ENCODE measurements at regions of chr18 and their contacts with region 1.

Region 1: DNA sequence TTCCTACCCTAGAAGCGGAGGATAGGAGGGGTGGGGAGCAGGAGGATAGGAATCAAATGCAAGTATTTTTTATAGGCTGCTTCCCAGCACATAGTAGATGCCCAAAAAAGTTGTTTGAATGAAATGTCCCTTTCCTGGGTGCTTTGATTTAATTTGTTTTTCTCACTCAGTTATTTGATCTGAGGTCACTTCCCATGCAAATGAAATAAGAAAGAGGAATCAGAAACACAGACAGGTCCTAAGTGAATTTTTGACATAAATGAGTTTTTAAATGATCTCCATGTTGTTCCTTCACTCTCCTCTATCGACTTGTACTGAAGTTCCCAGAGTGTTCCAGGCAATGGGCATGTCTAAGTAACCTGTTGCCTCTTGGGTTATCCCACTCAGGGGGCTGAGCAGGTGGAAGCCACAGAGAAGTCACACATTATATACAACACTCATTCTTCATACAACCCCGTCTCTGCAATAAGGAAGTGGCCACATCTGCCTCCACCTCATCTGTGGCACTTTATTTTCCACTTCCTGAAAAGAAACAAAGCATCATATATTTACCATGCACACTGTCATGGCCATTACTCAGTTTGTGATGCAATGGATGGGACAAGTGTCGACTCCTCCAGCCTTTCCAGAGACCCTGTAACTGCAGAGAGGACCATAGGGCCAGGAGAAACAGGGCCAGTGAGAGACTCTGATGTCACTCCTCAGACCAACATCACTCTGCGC is 81.9 kb upstream of the ZNF397 start:
- DNase-seq: peak; percentile 30 to 36
- ATAC-seq: peak; percentile 84 to 88 (median 85)
- H3K4me3 ChIP-seq: no peak overlapping the region
- H3K4me3 Mint-ChIP-seq: peak overlapping the region; percentile 62
- H3K27ac ChIP-seq: peak overlapping the region; percentile 86
- H3K27ac Mint-ChIP-seq: peak overlapping the region; percentile 92
- H3K4me1 ChIP-seq: peaks cover 50% of the 10 kb centered on the region
- H3K4me1 Mint-ChIP-seq: peaks cover 71 to 72% of the 10 kb centered on the region in 2 donors
- H3K27me3 ChIP-seq: no peaks in the 10 kb centered on the region
- H3K27me3 Mint-ChIP-seq: no peaks in the 10 kb centered on the region
- CTCF ChIP-seq: no peak

Region 2: DNA sequence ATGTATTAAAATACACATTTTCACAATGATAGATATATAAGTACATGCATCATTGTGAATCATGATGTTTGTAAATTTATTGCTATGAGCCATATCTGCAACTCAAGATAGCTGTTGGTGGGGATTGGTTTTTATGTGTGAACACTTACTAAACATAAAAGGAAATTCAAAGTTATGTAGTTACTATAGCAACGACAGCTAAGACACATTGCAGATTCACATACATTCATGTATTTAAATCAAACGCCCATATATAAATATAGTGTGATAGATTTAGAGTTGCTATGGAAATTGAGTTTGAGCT is 52.1 kb before region 1 on chr18:
- intact Hi-C with region 1: loop called (anchors 1 kb)
- DNase-seq: peak in 1 of 2 donors; percentile 57
- ATAC-seq: peak; percentile 76 to 88 (median 84)
- H3K4me3 ChIP-seq: no peak overlapping the region
- H3K4me3 Mint-ChIP-seq: peak overlapping the region; percentile 28
- H3K27ac ChIP-seq: peak overlapping the region; percentile 73
- H3K27ac Mint-ChIP-seq: no peak overlapping the region
- H3K4me1 ChIP-seq: no peaks in the 10 kb centered on the region
- H3K4me1 Mint-ChIP-seq: peaks cover 51 to 73% of the 10 kb centered on the region in 2 donors
- H3K27me3 ChIP-seq: no peaks in the 10 kb centered on the region
- H3K27me3 Mint-ChIP-seq: no peaks in the 10 kb centered on the region
- CTCF ChIP-seq: no peak

Region 3: GRCh38 chr18:35220432-35220831 is 61.5 kb after region 1 on chr18:
- intact Hi-C with region 1: no loop called
- DNase-seq: no peak
- ATAC-seq: no peak
- H3K4me3 ChIP-seq: no peak overlapping the region
- H3K4me3 Mint-ChIP-seq: no peak overlapping the region
- H3K27ac ChIP-seq: no peak overlapping the region
- H3K27ac Mint-ChIP-seq: no peak overlapping the region
- H3K4me1 ChIP-seq: no peaks in the 10 kb centered on the region
- H3K4me1 Mint-ChIP-seq: peaks cover 0 to 5% of the 10 kb centered on the region in 2 donors
- H3K27me3 ChIP-seq: no peaks in the 10 kb centered on the region
- H3K27me3 Mint-ChIP-seq: peaks cover 14 to 15% of the 10 kb centered on the region in 2 donors
- CTCF ChIP-seq: no peak

Region 4: DNA sequence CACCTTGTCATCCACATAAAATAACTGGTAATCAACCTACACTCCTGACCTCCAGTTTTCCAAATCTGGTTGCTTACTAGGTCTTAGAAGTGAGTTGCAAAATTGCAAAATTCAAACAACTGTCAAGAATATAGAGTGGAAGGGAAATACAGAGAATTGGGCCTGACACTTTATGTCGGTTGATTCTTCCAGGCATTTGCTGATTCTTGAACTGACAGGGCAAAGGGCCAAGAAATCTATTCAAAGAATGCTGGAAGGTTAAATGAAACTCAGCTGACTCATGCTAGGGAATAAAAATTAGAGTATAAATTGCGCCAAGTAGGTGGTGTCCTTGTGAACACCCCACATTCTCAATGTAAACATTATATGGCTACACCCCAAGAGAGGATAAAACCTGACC is 152.6 kb after region 1 on chr18:
- intact Hi-C with region 1: no loop called
- DNase-seq: no peak
- ATAC-seq: no peak
- H3K4me3 ChIP-seq: no peak overlapping the region
- H3K4me3 Mint-ChIP-seq: no peak overlapping the region
- H3K27ac ChIP-seq: no peak overlapping the region
- H3K27ac Mint-ChIP-seq: no peak overlapping the region
- H3K4me1 ChIP-seq: no peaks in the 10 kb centered on the region
- H3K4me1 Mint-ChIP-seq: no peaks in the 10 kb centered on the region
- H3K27me3 ChIP-seq: no peaks in the 10 kb centered on the region
- H3K27me3 Mint-ChIP-seq: no peaks in the 10 kb centered on the region
- CTCF ChIP-seq: no peak

Region 5: DNA sequence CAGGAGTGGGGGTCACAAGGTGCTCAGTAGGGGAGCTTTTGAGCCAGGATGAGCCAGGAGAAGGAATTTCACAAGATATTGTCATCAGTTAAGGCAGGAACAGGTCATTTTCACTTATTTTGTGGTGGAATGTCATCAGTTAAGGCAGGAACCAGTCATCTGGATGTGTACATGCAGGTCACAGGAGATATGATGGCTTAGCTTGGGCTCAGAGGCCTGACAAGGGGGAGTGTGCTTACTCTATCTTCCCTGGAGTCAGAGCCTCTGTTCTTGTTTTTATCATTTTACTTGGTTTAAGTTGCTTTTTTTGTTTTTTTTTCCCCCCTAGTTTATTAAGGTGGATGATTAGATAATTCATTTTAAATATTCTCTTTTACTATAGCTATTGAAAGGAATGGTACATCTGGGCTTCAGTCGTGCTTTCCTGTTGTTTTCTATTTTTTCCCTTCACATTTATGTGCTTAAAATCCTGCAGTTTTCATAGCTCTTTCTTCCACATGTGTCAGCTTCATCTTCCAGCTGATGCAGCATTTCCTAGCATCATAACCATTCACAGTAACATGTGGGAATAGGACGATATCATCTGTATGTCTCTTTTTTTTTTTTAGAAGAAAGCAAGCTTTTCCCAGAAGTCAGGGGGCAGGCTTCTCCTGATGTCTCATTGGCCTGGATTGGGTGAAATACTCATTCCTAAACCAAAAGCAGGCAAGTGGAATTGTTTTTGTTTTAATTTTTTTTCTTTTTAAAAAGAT is 202.9 kb after region 1 on chr18:
- intact Hi-C with region 1: no loop called
- DNase-seq: no peak
- ATAC-seq: no peak
- H3K4me3 ChIP-seq: no peak overlapping the region
- H3K4me3 Mint-ChIP-seq: no peak overlapping the region
- H3K27ac ChIP-seq: no peak overlapping the region
- H3K27ac Mint-ChIP-seq: no peak overlapping the region
- H3K4me1 ChIP-seq: no peaks in the 10 kb centered on the region
- H3K4me1 Mint-ChIP-seq: no peaks in the 10 kb centered on the region
- H3K27me3 ChIP-seq: no peaks in the 10 kb centered on the region
- H3K27me3 Mint-ChIP-seq: peaks cover 0 to 17% of the 10 kb centered on the region in 2 donors
- CTCF ChIP-seq: no peak

Measured in natural killer cell (primary cell).